ENCODE measurements at regions of chr10 and their contacts with region 1.

Region 1: GRCh38 chr10:70146489-70147258 is at the start of gene TYSND1:
- DNase-seq: peak; percentile 98
- H3K4me3 Mint-ChIP-seq: peak within 1 kb of the TSS; percentile 94
- H3K27ac Mint-ChIP-seq: peak within 1 kb of the TSS; percentile 97
- H3K4me1 Mint-ChIP-seq: peaks cover 16% of the 10 kb centered on the region
- H3K27me3 Mint-ChIP-seq: peaks cover 2% of the 10 kb centered on the region
- total RNA-seq, gene TYSND1: 14.9 and 15.3 TPM in 2 replicates

Region 2: DNA sequence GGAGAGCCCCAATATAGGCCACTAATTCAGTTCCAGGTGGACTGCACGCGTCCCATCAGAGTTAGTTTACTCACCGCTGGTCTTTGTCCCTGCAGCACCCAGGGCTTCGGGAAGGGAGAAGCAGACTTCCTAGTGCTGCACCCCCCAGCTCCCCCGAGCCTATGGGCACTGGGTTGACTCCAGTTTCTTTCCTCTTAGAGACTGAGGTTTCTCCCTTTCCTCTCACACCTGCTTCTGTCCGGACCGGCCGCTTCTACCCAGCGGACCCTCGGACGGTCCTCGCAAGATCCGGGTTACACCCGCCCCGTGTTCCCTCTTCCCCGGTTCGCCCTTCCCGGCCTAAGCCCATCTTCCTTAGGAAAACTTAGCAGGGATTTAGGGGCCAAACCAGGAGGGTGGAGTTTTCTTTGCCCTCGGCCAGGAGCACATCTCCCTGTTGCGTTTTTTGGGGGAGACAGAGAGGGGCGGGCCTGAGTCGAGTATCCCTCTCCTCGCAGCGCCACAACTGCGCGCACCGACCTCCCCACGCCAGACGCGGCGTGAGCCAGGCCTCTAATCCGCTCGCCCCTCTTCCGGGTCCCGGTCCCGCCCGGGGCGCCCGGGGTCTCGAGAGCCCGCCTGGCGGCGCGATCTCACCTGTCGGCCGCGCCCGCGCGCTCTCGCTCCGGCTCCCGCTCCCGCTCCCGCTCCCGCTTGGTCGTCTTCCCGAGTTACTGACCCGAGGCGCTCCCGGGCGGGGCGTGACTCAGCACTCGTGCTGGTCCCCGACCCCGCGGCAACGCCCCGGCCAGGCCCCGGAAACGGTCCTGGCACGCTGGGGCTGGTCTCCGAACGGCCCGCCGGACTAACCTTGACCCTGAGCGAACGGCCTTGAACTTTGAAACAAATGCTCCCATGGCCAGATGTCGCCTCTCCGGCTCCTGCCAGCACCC is 14.3 kb before region 1 on chr10 and contains the start of gene AIFM2:
- intact Hi-C with region 1: loop called (anchors 1 kb)
- DNase-seq: peak; percentile 82
- H3K4me3 Mint-ChIP-seq: peak within 1 kb of the TSS; percentile 88
- H3K27ac Mint-ChIP-seq: peak within 1 kb of the TSS; percentile 87
- H3K4me1 Mint-ChIP-seq: peaks cover 13% of the 10 kb centered on the region
- H3K27me3 Mint-ChIP-seq: peaks cover 2% of the 10 kb centered on the region
- total RNA-seq, gene AIFM2: 8.0 and 8.5 TPM in 2 replicates

Region 3: DNA sequence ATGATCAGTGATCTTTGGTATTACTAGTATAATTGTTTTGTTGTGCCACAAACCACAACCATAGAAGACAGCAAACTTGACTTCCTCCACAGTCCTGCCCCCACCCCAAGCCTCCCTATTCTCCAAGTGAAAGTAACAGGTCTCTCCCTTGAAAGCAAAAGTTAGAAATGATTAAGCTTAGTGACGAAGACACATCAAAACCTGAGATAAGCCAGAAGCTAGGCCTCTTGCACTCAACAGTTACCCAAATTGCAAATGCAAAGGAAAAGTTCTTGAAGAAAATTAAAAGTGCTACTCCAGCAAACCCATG is 16.2 kb after region 1 on chr10:
- intact Hi-C with region 1: loop called (anchors 1 kb)
- DNase-seq: peak; percentile 89
- H3K4me3 Mint-ChIP-seq: peak overlapping the region; percentile 50
- H3K27ac Mint-ChIP-seq: peak overlapping the region; percentile 88
- H3K4me1 Mint-ChIP-seq: peaks cover 57% of the 10 kb centered on the region
- H3K27me3 Mint-ChIP-seq: no peaks in the 10 kb centered on the region

Region 4: DNA sequence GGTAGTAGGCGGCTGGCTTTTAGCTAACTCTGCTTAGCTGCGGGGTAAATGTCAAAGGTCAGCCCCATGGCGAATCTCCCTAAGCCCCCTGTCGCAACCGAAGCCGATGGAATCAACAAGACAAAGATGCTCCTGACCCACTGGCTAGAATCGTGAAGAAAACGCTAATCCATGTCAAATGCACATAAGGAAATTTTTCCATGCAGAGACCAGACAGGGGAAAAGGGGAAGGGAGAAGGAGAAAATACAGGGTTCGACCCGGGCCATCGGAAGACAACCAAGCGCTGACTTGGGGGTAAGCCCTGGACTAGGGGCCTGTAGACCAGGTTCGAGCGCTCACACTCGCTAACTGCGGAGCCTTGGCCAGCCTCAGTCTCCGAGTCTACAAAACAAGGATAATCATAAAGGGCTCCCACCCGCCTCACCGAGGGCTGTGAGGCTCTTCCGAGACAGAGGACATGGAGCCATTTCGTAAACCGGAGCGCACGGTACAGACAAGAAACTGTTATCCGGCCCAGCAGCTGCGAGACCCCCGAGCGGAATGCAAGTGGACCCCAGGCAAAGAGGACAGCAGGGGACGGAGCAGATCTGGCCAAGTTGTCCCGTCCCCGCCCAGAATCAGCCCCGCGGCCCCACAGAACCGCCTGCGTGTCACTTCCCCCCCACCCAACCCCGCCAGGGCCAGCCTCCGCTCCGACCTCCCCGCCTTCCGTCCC is 23.1 kb after region 1 on chr10:
- intact Hi-C with region 1: loop called (anchors 1 kb)
- DNase-seq: peak; percentile 70
- H3K4me3 Mint-ChIP-seq: peak overlapping the region; percentile 96
- H3K27ac Mint-ChIP-seq: peak overlapping the region; percentile 96
- H3K4me1 Mint-ChIP-seq: peaks cover 42% of the 10 kb centered on the region
- H3K27me3 Mint-ChIP-seq: no peaks in the 10 kb centered on the region

Region 5: DNA sequence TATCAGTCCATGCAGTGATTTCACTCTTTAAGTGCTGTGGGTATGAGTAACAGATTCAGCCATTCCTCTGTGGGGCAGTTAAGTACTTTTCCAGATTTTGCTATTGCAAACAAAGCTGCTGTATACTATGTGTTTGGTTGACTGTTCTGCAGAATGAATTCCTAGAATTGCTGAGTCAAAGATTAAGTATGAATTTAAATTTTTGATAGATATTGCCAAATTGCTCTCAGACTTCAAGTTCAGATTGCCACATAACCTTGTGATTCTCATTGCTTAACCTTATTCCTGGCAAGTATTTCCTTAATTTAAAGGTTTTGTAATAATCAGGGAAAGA is 45.3 kb after region 1 on chr10:
- intact Hi-C with region 1: loop called (anchors 5 kb)
- DNase-seq: no peak
- H3K4me3 Mint-ChIP-seq: no peak overlapping the region
- H3K27ac Mint-ChIP-seq: no peak overlapping the region
- H3K4me1 Mint-ChIP-seq: no peaks in the 10 kb centered on the region
- H3K27me3 Mint-ChIP-seq: no peaks in the 10 kb centered on the region

Region 6: DNA sequence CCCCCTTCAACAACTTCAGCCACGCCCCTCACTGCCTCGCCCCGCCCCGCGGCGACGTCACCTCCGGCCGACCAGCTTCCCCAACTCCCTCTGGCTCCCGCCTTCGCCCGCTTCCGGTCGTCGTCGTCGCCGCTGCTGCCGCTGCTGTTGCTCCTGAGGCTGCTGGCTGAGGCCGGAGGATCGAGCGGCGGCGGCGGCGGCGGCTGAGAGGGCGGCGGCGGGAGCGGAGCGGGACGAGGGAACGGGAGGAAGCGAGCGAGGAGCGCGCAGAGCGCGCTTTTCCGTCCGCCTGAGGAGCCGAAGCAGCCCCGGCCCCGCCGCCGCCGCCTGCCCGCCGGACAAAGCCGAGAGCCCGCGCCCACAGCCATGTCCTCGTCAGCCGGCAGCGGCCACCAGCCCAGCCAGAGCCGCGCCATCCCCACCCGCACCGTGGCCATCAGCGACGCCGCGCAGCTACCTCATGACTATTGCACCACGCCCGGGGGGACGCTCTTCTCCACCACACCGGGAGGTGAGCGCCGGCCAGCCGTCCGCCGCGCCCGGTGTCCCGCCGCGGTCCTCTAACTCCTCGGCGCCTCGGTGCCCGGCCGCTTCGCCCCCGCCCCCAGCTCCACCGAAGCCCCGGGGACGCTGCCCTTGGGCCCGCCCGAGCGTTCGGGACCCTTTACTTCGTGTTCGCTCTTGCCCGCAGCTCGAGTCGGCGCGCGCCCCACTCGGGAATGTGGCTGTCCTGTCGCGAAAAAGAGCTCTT is 257.5 kb after region 1 on chr10 and contains the start of gene EIF4EBP2:
- intact Hi-C with region 1: loop called (anchors 1 kb)
- DNase-seq: peak; percentile 100
- H3K4me3 Mint-ChIP-seq: peak within 1 kb of the TSS; percentile 98
- H3K27ac Mint-ChIP-seq: peak within 1 kb of the TSS; percentile 96
- H3K4me1 Mint-ChIP-seq: peaks cover 36% of the 10 kb centered on the region
- H3K27me3 Mint-ChIP-seq: peaks cover 2% of the 10 kb centered on the region
- total RNA-seq, gene EIF4EBP2: 37.6 and 38.3 TPM in 2 replicates